Naive thymus-derived CD4-positive, alpha-beta T cell (primary cell): ENCODE measurements at regions of chr18 and their contacts with region 1.

Region 1: GRCh38 chr18:24014062-24014985 is at the start of gene TTC39C:
- DNase-seq: peak; percentile 60 to 90 (median 74)
- ATAC-seq: peak; percentile 71
- H3K4me3 ChIP-seq: peak within 1 kb of the TSS; percentile 86
- H3K4me3 Mint-ChIP-seq: peak within 1 kb of the TSS; percentile 93 to 100 (median 98)
- H3K27ac ChIP-seq: peak within 1 kb of the TSS; percentile 84
- H3K27ac Mint-ChIP-seq: peak within 1 kb of the TSS; percentile 92 to 98 (median 95)
- H3K4me1 ChIP-seq: peaks cover 72 to 80% of the 10 kb centered on the region in 2 donors
- H3K4me1 Mint-ChIP-seq: peaks cover 58 to 84% (median 72%) of the 10 kb centered on the region in 7 donors
- H3K27me3 ChIP-seq: no peaks in the 10 kb centered on the region
- H3K27me3 Mint-ChIP-seq: no peaks in the 10 kb centered on the region
- total RNA-seq, gene TTC39C: 84.1 to 98.8 (median 91.4) TPM

Region 2: GRCh38 chr18:23071285-23071684 is 943.0 kb before region 1 on chr18:
- CTCF ChIA-PET with region 1: no interaction called
- POLR2A ChIA-PET with region 1: interaction called, 3 read pairs
- intact Hi-C with region 1: loop called in 1 of 2 experiments (anchors 10 kb)
- DNase-seq: peak; percentile 49 to 94 (median 92)
- ATAC-seq: peak; percentile 99
- H3K4me3 ChIP-seq: peak overlapping the region; percentile 12
- H3K4me3 Mint-ChIP-seq: peak overlapping the region; percentile 73 to 91 (median 78)
- H3K27ac ChIP-seq: peak overlapping the region; percentile 18
- H3K27ac Mint-ChIP-seq: peak overlapping the region; percentile 69 to 94 (median 91)
- H3K4me1 ChIP-seq: peaks cover 44 to 50% of the 10 kb centered on the region in 2 donors
- H3K4me1 Mint-ChIP-seq: peaks cover 46 to 83% (median 77%) of the 10 kb centered on the region in 7 donors
- H3K27me3 ChIP-seq: no peaks in the 10 kb centered on the region
- H3K27me3 Mint-ChIP-seq: peaks cover 0 to 3% (median 0%) of the 10 kb centered on the region in 5 donors

Region 3: DNA sequence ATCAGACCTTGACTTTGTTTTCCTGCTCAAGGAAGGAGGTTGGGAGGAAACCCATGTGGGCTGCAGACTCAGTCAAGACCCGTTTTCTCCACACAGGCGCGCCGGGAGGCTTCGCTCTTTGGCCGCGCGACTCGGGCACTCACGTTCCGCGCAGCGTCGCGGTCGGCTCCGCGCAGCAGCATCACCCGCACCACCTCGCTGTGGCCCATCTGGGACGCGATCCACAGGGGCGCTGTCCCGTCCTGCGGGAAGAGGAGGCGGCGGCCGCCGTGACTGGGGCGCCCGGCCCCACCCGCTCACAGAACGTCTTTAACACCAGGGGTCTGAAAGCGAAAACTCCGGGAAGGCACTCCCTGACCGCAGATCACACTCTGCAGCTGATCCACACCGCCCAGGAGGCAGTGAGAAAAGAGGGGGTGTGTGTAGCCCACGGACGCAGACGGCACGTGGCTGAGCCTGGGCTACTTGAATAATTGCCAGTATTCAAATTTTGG is 394.9 kb before region 1 on chr18:
- CTCF ChIA-PET with region 1: no interaction called
- POLR2A ChIA-PET with region 1: no interaction called
- intact Hi-C with region 1: loop called (anchors 1 to 10 kb)
- DNase-seq: peak in 2 of 9 donors; percentile 10 to 11
- ATAC-seq: peak; percentile 51
- H3K4me3 ChIP-seq: peak overlapping the region; percentile 35
- H3K4me3 Mint-ChIP-seq: peak overlapping the region in 9 of 10 donors; percentile 5 to 75 (median 48)
- H3K27ac ChIP-seq: no peak overlapping the region
- H3K27ac Mint-ChIP-seq: no peak overlapping the region
- H3K4me1 ChIP-seq: peaks cover 0 to 7% of the 10 kb centered on the region in 2 donors
- H3K4me1 Mint-ChIP-seq: peaks cover 0 to 16% (median 6%) of the 10 kb centered on the region in 7 donors
- H3K27me3 ChIP-seq: peaks cover 4 to 14% of the 10 kb centered on the region in 2 donors
- H3K27me3 Mint-ChIP-seq: peaks cover 33 to 54% (median 40%) of the 10 kb centered on the region in 5 donors

Region 4: DNA sequence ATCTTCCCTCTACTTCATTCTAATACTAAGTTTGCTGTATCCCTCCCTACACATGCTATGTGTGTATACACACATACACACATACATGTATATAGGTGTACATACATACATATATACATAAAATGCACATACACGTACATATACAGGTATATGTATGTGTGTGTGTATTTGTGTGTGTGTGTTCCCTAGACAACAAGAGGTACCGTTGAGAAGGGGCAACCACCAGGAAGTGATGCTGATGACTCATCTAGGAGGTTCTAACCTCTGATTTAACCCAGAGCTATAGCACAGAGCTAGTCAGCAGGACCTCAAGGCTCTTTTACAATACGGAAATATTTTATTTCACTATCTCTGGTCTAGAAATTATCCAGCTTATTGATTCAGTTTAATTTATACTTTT is 185.9 kb before region 1 on chr18:
- CTCF ChIA-PET with region 1: interaction called, 4 read pairs
- POLR2A ChIA-PET with region 1: no interaction called
- intact Hi-C with region 1: loop called (anchors 1 to 2 kb)
- DNase-seq: peak in 7 of 9 donors; percentile 13 to 74 (median 57)
- ATAC-seq: peak; percentile 99
- H3K4me3 ChIP-seq: no peak overlapping the region
- H3K4me3 Mint-ChIP-seq: peak overlapping the region in 1 of 10 donors; percentile 47
- H3K27ac ChIP-seq: no peak overlapping the region
- H3K27ac Mint-ChIP-seq: peak overlapping the region in 7 of 9 donors; percentile 2 to 86 (median 55)
- H3K4me1 ChIP-seq: peaks cover 0 to 10% of the 10 kb centered on the region in 2 donors
- H3K4me1 Mint-ChIP-seq: peaks cover 0 to 40% (median 23%) of the 10 kb centered on the region in 7 donors
- H3K27me3 ChIP-seq: no peaks in the 10 kb centered on the region
- H3K27me3 Mint-ChIP-seq: no peaks in the 10 kb centered on the region

Region 5: GRCh38 chr18:23918401-23919032 is 95.8 kb before region 1 on chr18:
- CTCF ChIA-PET with region 1: interaction called, 3 read pairs
- POLR2A ChIA-PET with region 1: interaction called, 4 read pairs
- intact Hi-C with region 1: loop called in 1 of 2 experiments (anchors 1 kb)
- DNase-seq: peak; percentile 47 to 74 (median 61)
- ATAC-seq: peak; percentile 87
- H3K4me3 ChIP-seq: no peak overlapping the region
- H3K4me3 Mint-ChIP-seq: no peak overlapping the region
- H3K27ac ChIP-seq: no peak overlapping the region
- H3K27ac Mint-ChIP-seq: peak overlapping the region in 3 of 9 donors; percentile 20 to 63 (median 62)
- H3K4me1 ChIP-seq: peaks cover 8 to 15% of the 10 kb centered on the region in 2 donors
- H3K4me1 Mint-ChIP-seq: peaks cover 10 to 31% (median 25%) of the 10 kb centered on the region in 7 donors
- H3K27me3 ChIP-seq: no peaks in the 10 kb centered on the region
- H3K27me3 Mint-ChIP-seq: peaks cover 0 to 27% (median 5%) of the 10 kb centered on the region in 5 donors

Region 6: GRCh38 chr18:23994361-23994902 is 19.9 kb before region 1 on chr18:
- CTCF ChIA-PET with region 1: interaction called, 4 read pairs
- POLR2A ChIA-PET with region 1: interaction called, 11 read pairs
- intact Hi-C with region 1: loop called (anchors 1 kb)
- DNase-seq: peak in 1 of 9 donors; percentile 11
- ATAC-seq: no peak
- H3K4me3 ChIP-seq: no peak overlapping the region
- H3K4me3 Mint-ChIP-seq: peak overlapping the region in 6 of 10 donors; percentile 16 to 63 (median 43)
- H3K27ac ChIP-seq: no peak overlapping the region
- H3K27ac Mint-ChIP-seq: peak overlapping the region in 8 of 9 donors; percentile 59 to 96 (median 70)
- H3K4me1 ChIP-seq: peaks cover 31 to 60% of the 10 kb centered on the region in 2 donors
- H3K4me1 Mint-ChIP-seq: peaks cover 15 to 60% (median 54%) of the 10 kb centered on the region in 7 donors
- H3K27me3 ChIP-seq: no peaks in the 10 kb centered on the region
- H3K27me3 Mint-ChIP-seq: peaks cover 0 to 6% (median 0%) of the 10 kb centered on the region in 5 donors

Region 7: DNA sequence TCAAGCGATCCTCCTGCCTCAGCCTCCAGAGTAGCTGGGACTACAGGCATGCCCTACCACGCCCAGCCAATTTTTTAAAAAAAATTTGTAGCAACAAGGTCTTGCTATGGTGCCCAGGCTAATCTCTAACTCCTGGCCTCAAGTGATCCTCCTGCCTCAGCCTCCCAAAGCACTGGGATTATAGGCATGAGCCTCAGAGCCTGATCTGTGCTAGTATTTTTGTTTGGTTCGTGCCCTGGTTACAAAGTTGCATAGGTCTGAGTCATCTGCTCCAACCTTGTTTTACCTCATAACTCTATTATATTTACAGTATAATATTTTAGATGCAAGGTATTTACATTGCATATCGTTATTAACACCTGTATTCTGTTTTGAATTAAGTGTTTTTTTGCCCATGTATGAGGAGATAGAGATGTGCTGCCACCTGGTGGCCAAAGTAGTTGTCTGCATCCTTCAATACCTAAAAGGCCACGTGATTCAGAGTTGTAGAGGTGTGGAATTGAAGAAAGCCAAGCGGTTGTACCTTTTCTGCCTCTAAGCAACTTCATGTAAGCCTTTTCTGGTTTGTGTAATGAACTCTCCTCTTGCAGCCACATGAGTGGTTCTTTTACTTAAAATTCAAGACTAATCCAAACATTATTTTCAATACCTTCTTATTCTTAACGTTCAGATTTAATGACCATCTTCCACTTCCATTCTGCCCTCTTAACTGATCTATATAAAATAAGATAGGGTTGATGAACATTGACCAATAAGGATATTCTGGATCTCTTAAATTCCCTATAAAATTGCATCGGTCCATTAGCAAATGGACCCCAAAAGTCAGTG is 104.6 kb after region 1 on chr18:
- CTCF ChIA-PET with region 1: no interaction called
- POLR2A ChIA-PET with region 1: no interaction called
- intact Hi-C with region 1: loop called (anchors 1 to 2 kb)
- DNase-seq: peak; percentile 49 to 82 (median 74)
- ATAC-seq: peak; percentile 98
- H3K4me3 ChIP-seq: no peak overlapping the region
- H3K4me3 Mint-ChIP-seq: no peak overlapping the region
- H3K27ac ChIP-seq: no peak overlapping the region
- H3K27ac Mint-ChIP-seq: peak overlapping the region in 7 of 9 donors; percentile 2 to 82 (median 61)
- H3K4me1 ChIP-seq: peaks cover 0 to 6% of the 10 kb centered on the region in 2 donors
- H3K4me1 Mint-ChIP-seq: peaks cover 1 to 41% (median 22%) of the 10 kb centered on the region in 7 donors
- H3K27me3 ChIP-seq: no peaks in the 10 kb centered on the region
- H3K27me3 Mint-ChIP-seq: no peaks in the 10 kb centered on the region

Region 8: DNA sequence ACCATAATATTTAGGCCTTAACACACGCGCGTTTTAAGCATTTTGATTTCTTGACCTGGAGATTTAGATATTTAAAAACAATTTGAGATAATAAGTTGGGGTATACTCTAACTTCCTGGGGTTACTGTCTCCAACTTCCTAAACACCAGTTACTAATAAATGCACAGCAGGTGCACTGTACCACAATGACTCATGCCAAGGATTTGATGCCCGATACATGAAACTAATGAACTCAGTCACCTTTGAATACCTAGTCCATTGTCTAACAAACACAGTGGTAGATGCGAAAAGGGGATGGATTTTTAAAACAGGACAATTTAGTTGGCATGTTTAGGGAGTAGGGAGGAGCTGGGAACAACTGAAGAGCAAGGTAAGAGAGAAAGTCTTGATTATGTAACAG is 145.8 kb after region 1 on chr18:
- CTCF ChIA-PET with region 1: no interaction called
- POLR2A ChIA-PET with region 1: no interaction called
- intact Hi-C with region 1: no loop called
- DNase-seq: no peak
- ATAC-seq: no peak
- H3K4me3 ChIP-seq: no peak overlapping the region
- H3K4me3 Mint-ChIP-seq: no peak overlapping the region
- H3K27ac ChIP-seq: no peak overlapping the region
- H3K27ac Mint-ChIP-seq: no peak overlapping the region
- H3K4me1 ChIP-seq: no peaks in the 10 kb centered on the region
- H3K4me1 Mint-ChIP-seq: no peaks in the 10 kb centered on the region
- H3K27me3 ChIP-seq: no peaks in the 10 kb centered on the region
- H3K27me3 Mint-ChIP-seq: no peaks in the 10 kb centered on the region